ENCODE measurements at regions of chr22 and their contacts with region 1.

Region 1: DNA sequence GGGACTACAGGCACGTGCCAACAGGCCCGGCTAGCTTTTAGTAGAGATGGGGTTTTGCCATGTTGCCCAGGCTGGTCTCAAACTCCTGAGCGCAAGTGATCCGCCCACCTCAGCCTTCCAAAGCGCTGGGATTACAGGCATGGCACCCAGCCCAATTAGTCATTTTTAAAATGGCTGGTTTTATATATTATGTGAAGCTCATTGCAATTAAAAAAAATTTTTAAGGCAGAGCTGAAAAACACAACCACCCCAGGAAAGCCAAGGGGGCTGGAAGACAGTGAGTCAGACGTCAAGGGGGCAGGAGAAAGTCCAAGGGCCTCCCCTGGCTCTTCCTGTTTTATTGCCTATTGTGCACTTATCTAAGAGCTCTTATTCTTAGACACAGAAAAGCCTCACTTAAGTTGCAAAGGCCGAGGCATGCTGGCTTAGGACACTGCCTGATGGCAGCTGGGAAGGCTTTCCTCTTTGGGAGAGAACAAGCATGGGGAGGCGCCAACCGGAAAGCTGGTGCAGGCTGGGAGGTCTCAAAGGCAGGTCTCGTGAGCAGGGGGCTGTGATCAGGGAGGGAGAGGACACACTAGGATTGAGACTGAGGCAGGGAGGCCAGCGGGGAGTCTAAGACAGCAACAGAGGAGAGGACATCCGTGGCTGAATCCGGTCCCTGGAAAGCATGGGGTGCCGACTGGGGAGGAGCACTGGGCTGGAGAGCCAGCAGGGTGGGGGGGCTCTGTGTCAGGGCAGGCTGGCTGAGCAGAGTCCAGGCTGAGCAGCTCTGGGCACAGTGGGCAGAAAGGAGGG is 11.1 kb upstream of the OSM start:
- DNase-seq: no peak
- ATAC-seq: no peak
- H3K4me3 ChIP-seq: no peak overlapping the region
- H3K27ac ChIP-seq: peak overlapping the region in 1 of 2 experiments; percentile 70; a peak in 3 of 6 replicates
- H3K4me1 ChIP-seq: peaks cover 8% of the 10 kb centered on the region; the same call in 1 of the 3 replicates
- CTCF ChIP-seq: no peak
- EP300 ChIP-seq: no peak
- POLR2A ChIP-seq: no peak
- RAD21 ChIP-seq: no peak

Region 2: DNA sequence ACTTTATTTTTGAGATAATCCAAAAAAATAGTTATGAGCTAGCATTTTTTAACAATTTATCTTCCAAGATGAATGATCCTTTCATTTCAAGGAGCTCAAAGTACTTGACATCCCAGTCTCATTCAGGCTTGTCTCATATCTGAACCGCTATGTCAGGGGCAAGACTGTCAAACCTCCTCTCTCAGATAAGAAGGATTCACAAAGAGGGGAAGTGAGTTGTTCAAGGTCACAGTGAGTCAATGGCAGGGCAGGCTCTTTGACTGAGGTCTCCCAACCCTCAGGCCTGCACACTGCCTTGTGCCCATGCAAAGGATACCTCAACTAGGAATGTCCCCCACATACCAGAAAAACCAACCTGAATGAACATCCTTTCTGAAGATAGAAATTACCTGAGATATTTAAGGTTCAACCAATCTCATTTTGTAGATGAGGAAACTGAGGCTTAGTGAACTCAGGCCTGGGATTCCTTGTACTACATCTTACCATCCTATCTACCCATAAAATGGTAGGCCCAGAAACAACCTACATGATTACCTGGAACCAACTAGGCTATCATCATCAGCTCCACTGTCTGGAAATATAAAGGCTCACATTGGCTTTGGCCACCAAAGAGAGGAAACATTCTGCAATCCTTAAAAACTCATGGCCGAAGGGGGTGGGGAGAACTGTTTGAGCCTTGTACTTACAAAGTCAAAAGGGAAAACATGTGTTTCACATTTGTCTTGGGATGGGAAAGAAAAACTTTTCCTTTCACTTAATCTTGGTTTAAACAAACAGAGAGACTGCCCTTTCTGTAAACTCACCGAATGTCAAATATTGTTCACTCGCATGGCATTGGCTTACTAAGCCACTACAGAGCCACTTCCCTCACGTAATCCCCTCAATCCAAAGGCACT is 82.3 kb before region 1 on chr22:
- CTCF ChIA-PET with region 1: no interaction called
- POLR2A ChIA-PET with region 1: no interaction called
- DNase-seq: no peak
- ATAC-seq: no peak
- H3K4me3 ChIP-seq: no peak overlapping the region; the same call in 2 of the 3 replicates
- H3K27ac ChIP-seq: peak overlapping the region; percentile 95 to 100
- H3K4me1 ChIP-seq: peaks cover 79% of the 10 kb centered on the region
- CTCF ChIP-seq: no peak
- EP300 ChIP-seq: no peak
- POLR2A ChIP-seq: no peak
- RAD21 ChIP-seq: 0 out of 5 replicates have a peak, but pooled peaks of 1 of the 2 experiments have one; percentile 9

Region 3: DNA sequence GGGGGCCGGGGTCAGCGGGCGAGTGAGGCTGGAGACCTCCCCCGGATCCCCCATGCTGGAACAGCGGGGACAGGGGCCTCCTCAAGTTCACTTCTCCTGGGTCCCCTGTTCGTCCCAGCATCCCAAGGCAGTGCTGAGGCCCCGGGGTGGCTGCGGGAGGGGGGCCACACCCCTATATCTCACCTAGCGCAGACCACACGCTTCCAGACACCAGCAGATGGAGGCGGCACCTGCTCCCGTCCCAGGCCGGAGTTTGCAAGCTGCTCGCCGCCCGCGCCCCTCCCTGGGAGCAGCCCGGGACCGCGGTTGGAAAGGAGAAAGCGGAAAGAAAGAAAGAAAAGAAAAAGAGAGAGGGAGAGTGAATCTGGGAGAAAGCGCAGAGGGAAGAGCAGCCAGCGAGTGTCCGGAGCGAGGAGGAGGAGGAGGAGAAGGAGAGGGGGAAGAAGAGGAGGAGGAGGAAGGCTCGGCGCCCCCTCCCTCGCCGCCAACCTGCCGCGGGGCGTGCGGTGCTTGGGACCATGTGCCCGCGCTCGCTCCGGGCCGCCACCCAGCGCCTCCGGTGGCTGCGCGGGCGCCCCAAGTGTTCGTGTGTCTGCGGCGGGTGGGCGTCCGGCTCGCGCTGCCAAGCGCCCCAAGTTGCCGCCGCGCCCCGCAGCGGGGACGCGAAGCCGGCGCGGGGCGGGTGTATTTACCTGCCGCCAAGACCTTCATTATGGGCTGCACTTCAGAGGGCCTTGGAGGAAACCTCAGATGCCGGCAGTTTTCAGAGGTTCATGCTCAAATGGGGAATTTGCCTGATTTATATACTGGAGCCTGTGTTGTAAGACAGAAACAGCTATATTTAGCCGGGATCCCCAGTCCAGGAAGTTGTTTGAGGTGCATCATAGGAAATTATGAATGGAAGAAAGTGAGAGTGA is 31.5 kb before region 1 on chr22 and contains the start of gene LIF:
- CTCF ChIA-PET with region 1: no interaction called
- POLR2A ChIA-PET with region 1: no interaction called
- DNase-seq: no peak
- ATAC-seq: no peak
- H3K4me3 ChIP-seq: no peak within 1 kb of the TSS
- H3K27ac ChIP-seq: peak within 1 kb of the TSS; percentile 99 to 100
- H3K4me1 ChIP-seq: peaks cover 100% of the 10 kb centered on the region
- CTCF ChIP-seq: no peak
- EP300 ChIP-seq: no peak
- POLR2A ChIP-seq: no peak
- RAD21 ChIP-seq: no peak
- polyA plus RNA-seq, gene LIF: 54.5 and 64.7 TPM in 2 replicates

Region 4: DNA sequence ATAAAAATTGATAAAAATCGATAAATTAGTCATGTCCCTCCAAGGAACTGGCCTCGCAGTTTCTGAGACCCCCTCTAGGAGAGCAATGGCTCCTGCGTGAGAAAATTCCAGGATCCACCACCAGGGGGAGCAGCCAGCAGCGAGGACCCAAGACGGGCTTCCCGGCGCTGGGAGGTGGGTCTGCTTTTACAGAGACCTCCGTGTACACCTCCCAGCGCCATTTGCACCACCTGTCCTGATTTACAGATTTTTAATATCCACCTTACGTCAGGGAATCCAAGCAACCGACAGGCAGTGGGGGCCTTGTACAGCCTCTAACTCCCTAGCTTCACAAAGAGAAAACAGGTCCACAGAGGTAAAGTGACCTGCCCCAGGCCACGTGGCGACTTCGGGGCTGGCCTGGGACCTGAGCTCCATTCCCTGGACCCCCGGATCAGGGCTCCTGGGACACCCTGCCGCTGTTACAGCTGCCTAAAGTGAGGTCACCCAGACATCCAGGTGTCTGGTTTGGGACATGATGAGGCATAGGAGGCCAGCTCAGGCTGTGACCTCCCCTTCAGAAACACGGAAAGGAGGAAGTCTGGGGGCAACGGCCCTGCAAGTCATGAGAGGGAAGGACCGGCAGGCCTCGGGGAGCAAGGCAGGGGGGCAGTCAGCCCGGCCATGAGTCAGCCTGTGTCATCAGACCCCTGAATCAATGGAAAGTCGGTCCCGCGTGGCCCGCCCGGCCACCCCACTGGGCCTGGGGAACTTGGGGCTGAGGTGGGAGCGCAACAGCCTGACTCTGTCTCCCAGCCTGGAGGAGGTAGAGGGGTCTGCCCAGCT is 14.6 kb before region 1 on chr22:
- CTCF ChIA-PET with region 1: interaction called, 34 read pairs
- POLR2A ChIA-PET with region 1: no interaction called
- DNase-seq: peak in 1 of 2 experiments; percentile 67
- ATAC-seq: peak; percentile 6 to 59; a peak in 3 of 6 replicates
- H3K4me3 ChIP-seq: no peak overlapping the region
- H3K27ac ChIP-seq: peak overlapping the region; percentile 99 to 100
- H3K4me1 ChIP-seq: peaks cover 55% of the 10 kb centered on the region
- CTCF ChIP-seq: peak; percentile 75
- EP300 ChIP-seq: no peak
- POLR2A ChIP-seq: no peak
- RAD21 ChIP-seq: peak; percentile 48 to 52; a peak in 4 of 5 replicates

Region 5: DNA sequence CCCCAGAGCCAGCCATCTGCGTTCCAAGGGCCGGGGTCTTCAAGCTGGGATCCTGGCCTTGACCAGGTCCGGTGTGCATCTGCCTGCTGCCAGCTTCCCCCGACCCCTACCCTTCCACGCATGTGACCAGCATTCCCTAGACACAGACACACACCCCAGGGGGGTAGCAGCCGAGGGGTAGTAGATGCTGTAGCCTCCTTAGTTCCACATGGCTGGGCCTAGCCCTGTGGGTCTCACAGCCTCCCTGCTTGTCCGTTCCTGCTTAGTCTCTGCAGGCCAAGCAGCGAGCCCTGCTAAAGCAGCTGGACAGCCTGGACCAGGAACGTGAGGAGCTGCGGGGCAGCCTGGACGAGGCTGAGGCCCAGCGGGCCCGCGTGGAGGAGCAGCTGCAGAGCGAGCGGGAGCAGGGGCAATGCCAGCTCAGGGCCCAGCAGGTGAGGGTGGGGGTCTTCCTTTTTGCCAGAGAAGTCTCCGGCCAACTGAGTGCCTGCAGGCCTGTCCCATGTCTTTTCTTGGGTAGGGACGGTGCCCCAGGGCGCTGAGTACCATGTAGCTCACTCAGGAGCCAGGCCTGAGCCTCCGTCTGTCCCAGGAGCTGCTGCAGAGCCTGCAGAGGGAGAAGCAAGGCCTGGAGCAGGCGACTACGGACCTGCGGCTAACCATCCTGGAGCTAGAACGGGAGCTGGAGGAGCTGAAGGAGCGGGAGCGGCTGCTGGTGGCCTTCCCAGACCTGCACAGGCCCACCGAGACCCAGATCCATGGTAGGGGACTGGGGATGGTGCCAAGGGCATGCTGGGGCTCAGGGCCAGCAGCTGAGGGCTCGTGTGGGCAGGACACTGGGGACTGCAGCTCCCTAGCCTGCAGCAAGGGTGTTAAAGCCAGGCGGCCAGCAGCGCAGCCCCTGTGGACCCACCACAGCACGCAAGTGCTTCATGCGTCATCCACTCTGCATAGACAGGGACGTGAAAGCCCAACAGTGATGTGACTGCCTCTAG is 95.9 kb after region 1 on chr22:
- CTCF ChIA-PET with region 1: no interaction called
- POLR2A ChIA-PET with region 1: no interaction called
- DNase-seq: no peak
- ATAC-seq: peak; percentile 5 to 20; a peak in 2 of 6 replicates
- H3K4me3 ChIP-seq: no peak overlapping the region
- H3K27ac ChIP-seq: no peak overlapping the region
- H3K4me1 ChIP-seq: no peaks in the 10 kb centered on the region
- CTCF ChIP-seq: no peak
- EP300 ChIP-seq: no peak
- POLR2A ChIP-seq: no peak
- RAD21 ChIP-seq: no peak

Region 6: GRCh38 chr22:30435674-30436126 is 158.0 kb after region 1 on chr22:
- CTCF ChIA-PET with region 1: no interaction called
- POLR2A ChIA-PET with region 1: no interaction called
- DNase-seq: no peak
- ATAC-seq: no peak
- H3K4me3 ChIP-seq: no peak overlapping the region
- H3K27ac ChIP-seq: peak overlapping the region in 1 of 2 experiments; percentile 4; a peak in 1 of 6 replicates
- H3K4me1 ChIP-seq: no peaks in the 10 kb centered on the region
- CTCF ChIP-seq: no peak
- EP300 ChIP-seq: no peak
- POLR2A ChIP-seq: no peak
- RAD21 ChIP-seq: no peak

Measured in A549 (cell line).